ENCODE measurements at regions of chr9 and their contacts with region 1.

Region 1: DNA sequence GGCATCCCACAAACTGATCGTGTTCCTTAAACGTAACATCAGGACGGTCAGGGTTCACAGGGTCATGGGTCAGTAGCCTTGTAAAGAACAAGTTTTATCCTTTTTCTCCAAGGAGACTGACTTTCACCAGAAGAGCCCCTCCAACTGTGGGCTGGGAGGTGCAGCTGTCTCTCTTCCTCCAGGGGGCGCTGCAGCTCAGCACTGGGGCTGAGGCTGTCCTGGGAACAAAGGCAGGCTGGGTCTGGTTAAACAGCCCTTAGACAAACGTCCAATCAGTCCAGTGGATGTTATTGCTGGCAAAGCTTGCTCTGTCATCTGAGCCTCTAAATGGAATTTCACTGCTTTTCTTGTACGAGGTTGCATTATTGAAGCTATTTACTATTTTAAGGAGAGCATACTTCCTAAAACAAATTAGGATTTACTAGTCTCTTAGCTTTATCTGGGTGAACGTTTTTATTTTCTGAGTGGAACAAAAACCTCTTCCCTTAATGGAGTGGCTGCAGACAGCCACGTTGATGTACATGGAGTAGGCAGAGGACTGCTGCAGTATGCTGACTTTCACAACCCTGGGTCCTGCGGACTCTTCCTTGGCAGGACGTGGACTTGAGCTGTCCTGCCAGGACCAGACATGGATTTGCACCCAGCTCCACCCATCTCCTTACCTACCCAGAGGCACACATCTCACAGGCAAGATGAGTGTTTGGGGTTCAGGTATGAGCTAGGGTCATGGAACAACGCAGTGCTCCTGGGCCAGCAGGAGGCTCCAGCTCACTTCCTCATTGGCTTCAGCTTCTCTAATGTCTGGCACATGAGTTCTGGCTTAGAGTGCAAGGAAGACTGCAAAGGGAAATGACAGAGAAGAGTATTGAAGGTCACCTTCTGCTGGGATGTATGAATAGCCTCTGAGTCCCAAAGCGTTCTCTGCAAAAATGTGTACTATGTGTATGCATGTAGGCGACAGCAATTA is 7.8 kb downstream of the EXOSC2 start:
- DNase-seq: peak; percentile 71 to 74
- ATAC-seq: peak; percentile 94 to 98
- H3K4me3 ChIP-seq: no peak overlapping the region
- H3K27ac ChIP-seq: no peak overlapping the region
- H3K4me1 ChIP-seq: no peaks in the 10 kb centered on the region
- CTCF ChIP-seq: peak; percentile 87
- EP300 ChIP-seq: no peak
- POLR2A ChIP-seq: no peak
- RAD21 ChIP-seq: peak; percentile 50 to 57; a peak in 4 of 5 replicates

Region 2: DNA sequence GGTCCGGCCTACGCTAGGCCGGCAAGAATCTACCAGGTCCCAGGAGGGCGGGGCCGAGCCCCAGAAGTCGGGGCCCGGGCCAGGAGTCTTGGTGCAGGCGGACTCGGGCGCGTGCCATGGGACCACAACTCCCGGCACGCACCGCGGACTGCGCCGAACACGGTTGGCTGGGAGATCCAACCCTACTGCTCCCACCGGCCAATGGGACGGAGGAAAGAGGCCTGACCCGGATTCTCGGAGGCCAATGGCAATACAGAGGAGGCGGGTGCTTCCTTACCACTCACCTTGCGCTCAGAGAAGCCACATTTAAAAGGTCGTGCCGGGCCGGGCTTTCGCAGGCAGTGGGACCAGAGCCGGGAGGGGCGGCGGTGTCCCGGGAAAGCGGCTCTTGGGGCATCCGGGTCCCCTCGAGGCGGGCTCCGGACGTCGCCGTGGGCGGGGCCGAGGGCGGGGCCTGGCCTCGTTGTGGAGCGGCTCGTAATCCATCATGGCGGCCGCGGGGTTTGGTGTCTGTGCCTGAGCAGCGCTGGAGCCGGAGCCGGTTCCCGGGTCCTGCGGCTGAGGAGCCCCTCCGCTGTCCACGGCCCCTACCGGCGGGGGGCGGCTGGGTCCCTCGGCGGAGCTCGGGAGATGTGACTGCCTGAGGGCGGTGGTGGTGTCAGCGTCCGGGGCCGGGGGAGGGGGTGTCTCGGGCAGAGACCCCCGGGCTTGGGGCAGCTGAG is 11.4 kb after region 1 on chr9:
- CTCF ChIA-PET with region 1: interaction called, 102 read pairs
- POLR2A ChIA-PET with region 1: no interaction called
- DNase-seq: peak; percentile 99
- ATAC-seq: peak; percentile 98
- H3K4me3 ChIP-seq: peak overlapping the region; percentile 90
- H3K27ac ChIP-seq: peak overlapping the region; percentile 95 to 97
- H3K4me1 ChIP-seq: peaks cover 30% of the 10 kb centered on the region; the same call in 2 of the 3 replicates
- CTCF ChIP-seq: no peak
- EP300 ChIP-seq: no peak
- POLR2A ChIP-seq: peak; percentile 61
- RAD21 ChIP-seq: no peak

Region 3: DNA sequence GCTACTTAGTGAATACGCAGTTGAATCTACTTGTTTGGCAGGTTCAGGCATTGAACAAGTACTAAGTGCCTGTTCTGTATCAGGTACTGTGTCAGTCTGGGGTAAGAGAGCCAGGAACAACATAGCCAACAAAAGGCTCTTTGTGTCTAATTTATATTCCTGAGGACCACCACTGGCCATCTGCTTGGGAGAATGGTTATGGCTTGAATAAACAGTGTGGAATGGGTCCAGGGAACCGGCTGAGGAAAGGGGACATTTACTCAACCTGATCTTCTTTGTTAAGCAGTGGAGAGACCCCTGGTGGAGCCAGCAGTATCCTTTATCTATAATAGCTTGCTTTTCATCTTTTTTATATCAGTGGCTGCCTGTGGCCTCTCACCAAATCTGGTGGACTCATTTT is 30.8 kb after region 1 on chr9:
- CTCF ChIA-PET with region 1: interaction called, 21 read pairs
- POLR2A ChIA-PET with region 1: no interaction called
- DNase-seq: peak in 1 of 2 experiments; percentile 40
- ATAC-seq: peak; percentile 66 to 80; a peak in 5 of 6 replicates
- H3K4me3 ChIP-seq: no peak overlapping the region
- H3K27ac ChIP-seq: peak overlapping the region; percentile 41 to 53; a peak in 1 of 6 replicates
- H3K4me1 ChIP-seq: peaks cover 25% of the 10 kb centered on the region
- CTCF ChIP-seq: peak; percentile 36; the same call in 2 of the 3 replicates
- EP300 ChIP-seq: no peak
- POLR2A ChIP-seq: no peak
- RAD21 ChIP-seq: 0 out of 5 replicates have a peak, but pooled peaks of 1 of the 2 experiments have one; percentile 11

Region 4: GRCh38 chr9:130842545-130842944 is 141.2 kb after region 1 on chr9:
- CTCF ChIA-PET with region 1: interaction called, 18 read pairs
- POLR2A ChIA-PET with region 1: no interaction called
- DNase-seq: no peak
- ATAC-seq: no peak
- H3K4me3 ChIP-seq: no peak overlapping the region
- H3K27ac ChIP-seq: peak overlapping the region in 1 of 2 experiments; percentile 91; a peak in 2 of 6 replicates
- H3K4me1 ChIP-seq: peaks cover 80% of the 10 kb centered on the region
- CTCF ChIP-seq: no peak
- EP300 ChIP-seq: no peak
- POLR2A ChIP-seq: no peak
- RAD21 ChIP-seq: no peak

Region 5: DNA sequence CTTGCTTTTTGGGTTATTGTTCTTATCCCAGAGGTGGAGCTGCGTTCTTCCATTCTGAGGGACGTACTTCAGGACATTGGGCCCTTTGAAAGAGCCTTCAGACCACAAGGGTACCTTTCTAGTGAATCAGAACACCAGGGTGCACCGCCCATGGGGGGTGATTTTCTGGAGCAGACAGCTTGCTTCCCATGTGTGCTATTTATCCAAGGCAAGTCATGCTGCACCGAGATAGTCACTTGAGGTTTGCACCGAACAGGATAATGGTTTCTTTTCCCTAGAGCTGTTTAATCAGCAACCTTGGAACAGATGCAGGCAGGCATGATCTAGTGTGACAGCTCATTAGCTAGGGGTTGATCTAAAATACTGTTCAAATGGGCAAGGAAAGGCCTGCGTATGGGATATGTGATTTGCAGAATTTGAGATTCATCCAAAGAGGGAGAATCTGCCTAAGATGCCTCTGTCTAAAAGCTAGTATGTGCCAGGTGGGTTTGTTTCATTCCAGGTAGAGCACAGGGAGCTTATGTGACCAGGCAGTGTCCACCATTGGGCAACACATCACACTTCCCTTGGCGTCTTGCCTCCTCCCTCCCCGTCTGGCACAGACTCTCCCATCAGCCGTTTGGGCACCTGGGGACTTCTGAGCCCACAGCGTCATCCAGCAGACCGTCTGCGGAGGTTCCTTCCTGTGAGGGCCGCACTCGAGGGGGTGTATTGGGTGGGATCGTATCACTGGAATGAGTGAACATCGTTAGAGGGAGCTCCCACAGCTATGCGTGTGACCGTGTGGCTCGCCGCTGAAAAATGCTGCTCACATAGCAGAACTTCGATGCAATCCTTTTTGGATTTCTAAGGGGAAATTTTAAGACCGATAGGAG is 156.8 kb after region 1 on chr9:
- CTCF ChIA-PET with region 1: interaction called, 176 read pairs
- POLR2A ChIA-PET with region 1: no interaction called
- DNase-seq: no peak
- ATAC-seq: peak in 1 of 2 experiments; percentile 30; a peak in 3 of 6 replicates
- H3K4me3 ChIP-seq: no peak overlapping the region
- H3K27ac ChIP-seq: no peak overlapping the region; a peak in 1 of 6 replicates
- H3K4me1 ChIP-seq: peaks cover 22% of the 10 kb centered on the region
- CTCF ChIP-seq: no peak
- EP300 ChIP-seq: no peak
- POLR2A ChIP-seq: no peak
- RAD21 ChIP-seq: no peak

Region 6: GRCh38 chr9:130990978-130991777 is 289.8 kb after region 1 on chr9:
- CTCF ChIA-PET with region 1: interaction called, 10 read pairs
- POLR2A ChIA-PET with region 1: no interaction called
- DNase-seq: no peak
- ATAC-seq: no peak
- H3K4me3 ChIP-seq: no peak overlapping the region
- H3K27ac ChIP-seq: no peak overlapping the region; a peak in 1 of 6 replicates
- H3K4me1 ChIP-seq: peaks cover 18% of the 10 kb centered on the region
- CTCF ChIP-seq: no peak
- EP300 ChIP-seq: no peak
- POLR2A ChIP-seq: no peak
- RAD21 ChIP-seq: no peak